Pancreas (tissue), 10 donors: ENCODE measurements at regions of chr4 and their contacts with region 1.

Region 1: DNA sequence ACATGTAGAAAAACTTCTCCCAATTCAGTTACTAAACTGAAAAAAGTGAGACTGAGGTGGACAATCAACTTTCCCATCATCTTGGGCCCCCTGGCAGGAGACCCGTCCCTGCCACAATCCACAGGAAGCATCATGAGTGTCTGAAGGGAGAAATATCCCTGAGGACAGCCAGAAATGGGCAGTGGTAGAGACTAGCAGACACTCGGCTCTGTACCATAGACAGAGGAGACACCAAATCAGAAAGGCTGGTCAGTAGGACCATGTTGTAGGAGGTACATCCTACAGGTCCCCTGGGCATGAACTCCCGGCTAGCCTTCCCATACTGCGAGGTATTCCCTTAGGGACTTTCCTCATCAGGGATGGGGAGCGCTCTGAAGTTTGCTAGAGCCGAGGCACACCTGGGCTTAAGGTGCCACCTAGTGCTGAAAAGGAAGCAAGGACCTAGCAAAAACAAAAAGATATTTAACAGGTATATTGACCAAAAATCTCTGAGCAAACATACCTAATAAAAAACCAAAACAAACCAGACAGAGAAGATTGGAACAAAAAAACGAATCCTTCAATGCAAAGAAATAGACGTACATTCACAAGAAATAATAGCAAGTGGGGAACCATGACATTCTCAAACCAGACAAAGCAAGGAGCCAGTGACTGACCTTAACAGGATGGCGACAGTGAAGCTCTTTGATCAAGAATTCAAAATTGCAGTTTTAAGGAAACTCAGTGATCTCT is 55.6 kb downstream of the HAUS3 start:
- DNase-seq: peak in 4 of 6 donors; percentile 33 to 51 (median 35)
- ATAC-seq: peak; percentile 77 to 99 (median 94)
- H3K4me3 ChIP-seq: no peak overlapping the region
- H3K27ac ChIP-seq: no peak overlapping the region
- H3K4me1 ChIP-seq: no peaks in the 10 kb centered on the region
- H3K27me3 ChIP-seq: no peaks in the 10 kb centered on the region
- CTCF ChIP-seq: peak in 3 of 4 donors; percentile 16 to 37 (median 31)

Region 2: DNA sequence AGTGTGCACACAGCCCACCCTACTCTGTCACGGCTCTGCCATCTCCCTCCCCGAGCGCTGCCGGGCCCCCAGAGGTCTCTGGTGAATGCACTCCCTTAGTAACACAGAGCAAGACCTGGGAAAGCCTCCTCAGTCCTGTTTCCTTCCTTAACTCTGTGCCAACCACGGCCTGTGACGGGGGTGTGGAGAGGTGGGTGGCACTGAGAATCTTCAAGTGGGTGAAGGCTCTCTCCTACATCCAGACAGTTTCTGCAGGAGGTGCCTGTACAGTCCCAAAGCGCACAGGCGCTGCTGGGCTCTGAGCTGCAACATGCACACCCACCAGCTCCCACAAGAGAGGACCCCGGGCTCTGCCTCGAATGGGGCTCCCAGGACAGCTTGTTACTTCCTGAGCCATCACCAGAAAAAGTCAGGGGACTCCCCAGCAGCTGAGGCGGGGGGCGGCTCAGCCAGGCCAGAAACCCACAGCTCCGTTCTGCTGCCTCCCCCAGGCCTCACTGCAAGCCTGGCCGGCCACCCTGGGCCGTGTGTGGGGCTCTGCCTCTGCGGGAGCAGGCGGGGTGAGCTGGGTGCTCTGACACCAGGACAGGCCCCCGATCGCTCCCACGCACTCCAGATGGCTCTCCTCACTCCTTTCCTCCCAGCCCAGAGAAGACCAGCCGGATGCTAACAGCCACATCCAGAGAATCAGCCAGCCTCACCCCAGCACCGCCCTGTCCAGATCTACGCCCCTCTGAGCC is 531.9 kb before region 1 on chr4:
- intact Hi-C with region 1: loop called in 1 of 3 experiments (anchors 5 kb)
- DNase-seq: no peak
- ATAC-seq: no peak
- H3K4me3 ChIP-seq: no peak overlapping the region
- H3K27ac ChIP-seq: no peak overlapping the region
- H3K4me1 ChIP-seq: no peaks in the 10 kb centered on the region
- H3K27me3 ChIP-seq: no peaks in the 10 kb centered on the region
- CTCF ChIP-seq: no peak

Region 3: GRCh38 chr4:1910643-1911042 is 275.7 kb before region 1 on chr4:
- intact Hi-C with region 1: loop called in 1 of 3 experiments (anchors 10 kb)
- DNase-seq: peak in 1 of 6 donors; percentile 45
- ATAC-seq: peak in 3 of 4 donors; percentile 69 to 79 (median 71)
- H3K4me3 ChIP-seq: no peak overlapping the region
- H3K27ac ChIP-seq: no peak overlapping the region
- H3K4me1 ChIP-seq: no peaks in the 10 kb centered on the region
- H3K27me3 ChIP-seq: no peaks in the 10 kb centered on the region
- CTCF ChIP-seq: peak in 3 of 4 donors; percentile 17 to 24 (median 22)